Mammary epithelial cell (primary cell): ENCODE measurements at regions of chr15 and their contacts with region 1.

Region 1: DNA sequence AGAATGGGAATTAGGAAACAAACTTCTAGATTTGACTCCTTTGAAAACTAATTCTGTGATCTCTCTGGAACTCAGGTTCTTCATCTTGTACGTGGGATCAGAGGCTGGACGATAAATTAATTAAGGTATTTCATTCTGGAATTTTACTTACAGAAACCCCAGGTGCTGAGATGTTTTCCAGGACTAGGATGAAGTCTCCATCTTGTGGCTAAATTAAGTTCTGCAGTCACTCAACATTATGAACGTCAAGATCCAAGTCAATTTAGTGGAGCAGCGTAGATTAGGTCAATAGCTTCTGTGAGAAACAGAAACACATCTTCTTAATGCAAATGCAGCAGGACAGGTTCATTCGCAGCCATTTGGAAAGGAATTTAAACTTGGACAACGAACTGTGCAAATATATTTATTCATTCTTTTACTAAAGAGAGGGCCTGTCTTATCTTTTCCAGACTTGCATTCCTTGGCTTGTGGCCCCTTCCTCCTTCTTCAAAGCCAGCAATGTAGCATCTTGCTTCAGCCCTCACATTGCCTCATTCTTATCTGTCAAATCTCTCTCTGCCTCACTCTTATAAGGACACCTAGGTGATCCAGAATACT is 26.7 kb upstream of the TMC3 start:
- DNase-seq: peak; percentile 48
- H3K4me3 ChIP-seq: no peak overlapping the region
- H3K27ac ChIP-seq: no peak overlapping the region
- H3K4me1 ChIP-seq: peaks cover 5% of the 10 kb centered on the region
- H3K27me3 ChIP-seq: no peaks in the 10 kb centered on the region
- CTCF ChIP-seq: peak; percentile 82

Region 2: DNA sequence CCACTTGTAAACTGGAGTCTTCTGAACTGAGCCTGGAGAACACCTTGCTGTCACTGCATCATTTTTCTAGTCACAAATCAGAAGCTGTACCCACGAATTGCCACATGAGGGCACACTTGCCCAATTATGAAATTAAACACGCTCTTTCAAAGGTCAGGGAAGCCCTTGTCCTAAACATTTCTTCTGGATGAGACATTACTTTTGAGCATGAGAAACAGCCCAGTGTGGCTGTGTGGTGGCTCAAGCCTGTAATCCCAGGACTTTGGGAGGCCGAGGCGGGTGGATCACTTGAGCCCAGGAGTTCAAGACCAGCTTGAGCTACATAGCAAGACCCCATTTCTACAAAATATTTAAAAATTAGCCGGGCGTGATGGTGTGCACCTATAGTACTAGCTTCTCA is 294.2 kb before region 1 on chr15:
- CTCF ChIA-PET with region 1: no interaction called
- dilution Hi-C with region 1: no loop called
- in situ Hi-C with region 1: loop called in 1 of 2 experiments (anchors 25 kb)
- intact Hi-C with region 1: loop called (anchors 5 kb)
- DNase-seq: peak; percentile 67
- H3K4me3 ChIP-seq: no peak overlapping the region
- H3K27ac ChIP-seq: no peak overlapping the region
- H3K4me1 ChIP-seq: peaks cover 11% of the 10 kb centered on the region
- H3K27me3 ChIP-seq: no peaks in the 10 kb centered on the region
- CTCF ChIP-seq: peak; percentile 79 to 82

Region 3: GRCh38 chr15:81111510-81112470 is 288.9 kb before region 1 on chr15:
- CTCF ChIA-PET with region 1: no interaction called
- dilution Hi-C with region 1: no loop called
- in situ Hi-C with region 1: loop called in 1 of 2 experiments (anchors 25 kb)
- intact Hi-C with region 1: loop called (anchors 5 kb)
- DNase-seq: peak; percentile 79
- H3K4me3 ChIP-seq: no peak overlapping the region
- H3K27ac ChIP-seq: peak overlapping the region; percentile 88
- H3K4me1 ChIP-seq: peaks cover 33% of the 10 kb centered on the region
- H3K27me3 ChIP-seq: no peaks in the 10 kb centered on the region
- CTCF ChIP-seq: no peak

Region 4: GRCh38 chr15:81274931-81275707 is 125.6 kb before region 1 on chr15:
- CTCF ChIA-PET with region 1: no interaction called
- dilution Hi-C with region 1: no loop called
- in situ Hi-C with region 1: loop called (anchors 5 kb)
- intact Hi-C with region 1: loop called (anchors 1 kb)
- DNase-seq: peak; percentile 54
- H3K4me3 ChIP-seq: no peak overlapping the region
- H3K27ac ChIP-seq: no peak overlapping the region
- H3K4me1 ChIP-seq: no peaks in the 10 kb centered on the region
- H3K27me3 ChIP-seq: no peaks in the 10 kb centered on the region
- CTCF ChIP-seq: peak; percentile 93 to 94

Region 5: DNA sequence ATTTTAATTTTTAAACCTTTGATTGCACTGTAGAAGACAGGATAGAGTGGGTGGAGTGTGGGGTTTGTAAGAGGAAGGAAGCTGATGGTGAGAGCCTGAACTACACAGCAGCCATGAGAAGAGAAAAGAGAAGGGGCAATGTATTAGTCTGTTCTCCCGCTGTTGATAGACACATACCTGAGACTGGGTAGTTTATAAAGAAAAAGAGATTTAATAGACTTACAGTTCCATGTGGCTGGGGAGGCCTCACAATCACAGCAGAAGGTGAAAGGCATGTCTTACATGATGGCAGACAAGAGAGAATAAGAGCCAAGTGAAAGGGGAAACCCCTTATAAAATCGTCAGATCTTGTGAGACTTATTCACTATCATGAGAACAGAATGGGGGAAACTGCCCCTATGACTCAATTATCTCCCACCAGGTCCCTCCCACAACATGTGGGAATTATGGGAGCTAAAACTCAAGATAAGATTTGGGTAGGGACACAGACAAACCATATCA is 114.1 kb before region 1 on chr15:
- CTCF ChIA-PET with region 1: no interaction called
- dilution Hi-C with region 1: no loop called
- in situ Hi-C with region 1: loop called in 1 of 2 experiments (anchors 5 kb)
- intact Hi-C with region 1: no loop called
- DNase-seq: no peak
- H3K4me3 ChIP-seq: no peak overlapping the region
- H3K27ac ChIP-seq: no peak overlapping the region
- H3K4me1 ChIP-seq: no peaks in the 10 kb centered on the region
- H3K27me3 ChIP-seq: no peaks in the 10 kb centered on the region
- CTCF ChIP-seq: no peak

Region 6: GRCh38 chr15:81301815-81302399 is 98.8 kb before region 1 on chr15:
- CTCF ChIA-PET with region 1: no interaction called
- dilution Hi-C with region 1: loop called (anchors 5 kb)
- in situ Hi-C with region 1: no loop called
- intact Hi-C with region 1: no loop called
- DNase-seq: no peak
- H3K4me3 ChIP-seq: no peak overlapping the region
- H3K27ac ChIP-seq: no peak overlapping the region
- H3K4me1 ChIP-seq: peaks cover 32% of the 10 kb centered on the region
- H3K27me3 ChIP-seq: no peaks in the 10 kb centered on the region
- CTCF ChIP-seq: no peak

Region 7: GRCh38 chr15:81336568-81336967 is 64.2 kb before region 1 on chr15:
- CTCF ChIA-PET with region 1: no interaction called
- dilution Hi-C with region 1: loop called (anchors 10 kb)
- in situ Hi-C with region 1: no loop called
- intact Hi-C with region 1: loop called (anchors 1 kb)
- DNase-seq: peak; percentile 32
- H3K4me3 ChIP-seq: no peak overlapping the region
- H3K27ac ChIP-seq: no peak overlapping the region
- H3K4me1 ChIP-seq: peaks cover 18% of the 10 kb centered on the region
- H3K27me3 ChIP-seq: no peaks in the 10 kb centered on the region
- CTCF ChIP-seq: peak; percentile 39 to 47